ENCODE measurements at regions of chr3 and their contacts with region 1.

Region 1: GRCh38 chr3:67507584-67507983 is 146.8 kb downstream of the SUCLG2 start:
- DNase-seq: no peak
- H3K4me3 ChIP-seq: no peak overlapping the region
- H3K27ac ChIP-seq: no peak overlapping the region
- H3K4me1 ChIP-seq: no peaks in the 10 kb centered on the region
- CTCF ChIP-seq: no peak

Region 2: DNA sequence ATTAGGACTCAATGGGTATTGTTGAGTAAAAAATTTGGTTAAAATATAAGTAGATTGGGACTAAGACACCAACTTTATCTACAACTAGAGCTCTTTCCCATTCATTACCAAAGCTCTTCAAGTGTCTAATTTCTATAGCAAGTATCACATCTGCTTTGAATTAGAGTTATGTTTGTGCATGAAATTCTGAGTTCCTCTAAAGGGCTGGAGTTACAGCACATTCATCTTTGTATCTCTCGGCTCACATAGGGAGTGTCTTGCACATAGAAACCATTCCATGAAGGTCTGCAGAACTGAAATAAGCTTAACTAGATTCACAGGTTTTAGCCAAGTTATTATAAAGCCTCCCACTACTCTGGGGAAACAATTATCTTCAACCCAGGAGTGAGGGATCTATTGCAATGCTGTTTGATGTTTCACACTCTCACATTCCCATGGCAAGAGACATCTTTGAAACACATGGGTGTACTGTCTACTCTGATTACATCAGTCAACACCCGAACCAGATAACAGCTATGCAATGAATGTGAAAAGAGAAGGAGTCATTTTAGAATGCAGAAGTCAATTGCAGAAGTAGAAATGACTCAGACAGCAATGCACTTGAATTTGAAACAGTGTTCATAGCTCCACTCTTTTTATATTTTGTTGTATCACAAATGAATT is 602.6 kb before region 1 on chr3:
- CTCF ChIA-PET with region 1: no interaction called
- POLR2A ChIA-PET with region 1: no interaction called
- intact Hi-C with region 1: no loop called
- DNase-seq: no peak
- H3K4me3 ChIP-seq: no peak overlapping the region
- H3K27ac ChIP-seq: no peak overlapping the region
- H3K4me1 ChIP-seq: no peaks in the 10 kb centered on the region
- CTCF ChIP-seq: no peak

Region 3: DNA sequence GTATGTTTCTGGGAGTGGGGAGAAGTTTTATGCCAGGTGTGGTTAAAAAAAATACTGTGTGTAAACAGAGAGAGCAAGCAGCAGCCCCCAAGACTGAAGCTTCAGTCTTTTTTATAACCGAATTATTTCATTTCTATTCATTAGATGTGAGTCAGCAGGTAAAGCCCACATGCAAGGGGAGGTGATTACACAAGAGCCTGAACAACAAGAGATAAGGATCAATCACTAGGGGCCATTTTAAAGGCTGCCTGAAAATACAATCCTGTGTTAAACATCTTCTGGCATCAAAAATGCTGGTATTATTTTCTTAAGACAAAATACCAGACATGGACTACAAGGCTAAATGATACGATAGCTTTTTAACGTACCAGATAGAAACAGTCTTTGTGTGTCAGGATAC is 70.5 kb before region 1 on chr3:
- CTCF ChIA-PET with region 1: no interaction called
- POLR2A ChIA-PET with region 1: no interaction called
- intact Hi-C with region 1: no loop called
- DNase-seq: no peak
- H3K4me3 ChIP-seq: no peak overlapping the region
- H3K27ac ChIP-seq: no peak overlapping the region
- H3K4me1 ChIP-seq: peaks cover 8% of the 10 kb centered on the region
- CTCF ChIP-seq: no peak

Region 4: GRCh38 chr3:67468511-67468910 is 39.1 kb before region 1 on chr3:
- CTCF ChIA-PET with region 1: no interaction called
- POLR2A ChIA-PET with region 1: no interaction called
- intact Hi-C with region 1: no loop called
- DNase-seq: no peak
- H3K4me3 ChIP-seq: no peak overlapping the region
- H3K27ac ChIP-seq: no peak overlapping the region
- H3K4me1 ChIP-seq: no peaks in the 10 kb centered on the region
- CTCF ChIP-seq: no peak

Region 5: GRCh38 chr3:67495751-67496150 is 11.8 kb before region 1 on chr3:
- CTCF ChIA-PET with region 1: interaction called, 3 read pairs
- POLR2A ChIA-PET with region 1: interaction called, 11 read pairs
- intact Hi-C with region 1: no loop called
- DNase-seq: no peak
- H3K4me3 ChIP-seq: no peak overlapping the region
- H3K27ac ChIP-seq: no peak overlapping the region
- H3K4me1 ChIP-seq: no peaks in the 10 kb centered on the region
- CTCF ChIP-seq: no peak

Measured in OCI-LY7 (cell line).